Gastrocnemius medialis (tissue), 4 donors: ENCODE measurements at regions of chr5 and their contacts with region 1.

Region 1: DNA sequence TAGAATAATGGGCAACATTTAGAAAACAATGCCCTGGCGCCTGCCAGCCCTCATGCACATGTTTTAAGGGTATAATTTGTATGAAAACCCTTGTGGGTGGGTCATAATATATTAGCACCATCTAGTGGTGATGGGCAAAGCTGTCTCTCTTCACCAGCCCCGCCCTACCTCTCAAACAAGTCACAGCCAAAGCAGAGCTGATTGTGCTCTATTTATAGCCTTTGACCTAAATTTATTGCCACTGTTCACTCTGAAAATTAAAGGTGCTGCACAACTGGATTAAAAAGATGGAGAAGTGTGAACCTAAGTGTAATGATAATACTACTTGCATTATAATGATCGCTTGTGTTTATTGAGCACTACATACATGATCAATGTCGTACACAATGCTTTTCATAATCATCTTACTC is 131.9 kb upstream of the ANKH start:
- DNase-seq: peak; percentile 38 to 58
- ATAC-seq: peak; percentile 92 to 93
- H3K4me3 ChIP-seq: no peak overlapping the region
- H3K27ac ChIP-seq: no peak overlapping the region
- H3K4me1 ChIP-seq: peaks cover 0 to 12% of the 10 kb centered on the region in 2 donors
- H3K27me3 ChIP-seq: no peaks in the 10 kb centered on the region
- CTCF ChIP-seq: peak; percentile 72 to 83 (median 75)
- POLR2A ChIP-seq: no peak

Region 2: GRCh38 chr5:14351845-14352712 is 651.4 kb before region 1 on chr5:
- in situ Hi-C with region 1: loop called in 3 of 4 experiments (anchors 25 kb)
- intact Hi-C with region 1: no loop called
- DNase-seq: peak; percentile 19 to 57
- ATAC-seq: peak; percentile 78 to 94
- H3K4me3 ChIP-seq: no peak overlapping the region
- H3K27ac ChIP-seq: no peak overlapping the region
- H3K4me1 ChIP-seq: no peaks in the 10 kb centered on the region
- H3K27me3 ChIP-seq: no peaks in the 10 kb centered on the region
- CTCF ChIP-seq: peak; percentile 69 to 96 (median 79)
- POLR2A ChIP-seq: no peak

Region 3: DNA sequence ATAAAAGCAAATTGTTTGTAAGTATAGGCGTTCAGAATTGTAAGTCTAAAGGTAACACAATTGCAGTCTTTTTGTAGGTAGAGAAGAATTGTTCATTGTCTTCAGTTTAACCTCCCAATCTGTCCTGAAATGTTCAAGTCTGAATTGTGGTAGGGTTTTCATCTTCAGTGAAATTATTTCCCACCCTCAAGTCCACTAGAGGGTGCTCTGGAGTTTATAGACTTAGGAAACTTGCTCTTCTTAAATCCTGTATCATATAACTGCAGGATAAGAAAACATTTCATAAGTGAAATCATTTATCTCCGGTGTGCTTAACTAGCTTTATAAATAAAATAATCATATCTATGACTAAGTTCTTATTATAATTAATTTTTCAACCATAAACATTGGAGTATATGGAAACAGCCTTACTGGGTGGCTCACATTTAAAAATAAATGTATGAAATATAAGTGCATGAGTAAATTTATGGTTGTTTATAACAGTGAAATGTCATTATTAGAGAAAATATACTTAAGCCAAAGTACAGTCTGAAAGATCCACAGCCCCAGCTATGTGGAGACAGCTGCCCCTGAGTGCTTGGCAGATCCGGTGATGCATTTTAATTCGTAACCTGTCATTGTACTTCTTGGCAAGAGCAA is 604.3 kb before region 1 on chr5:
- in situ Hi-C with region 1: loop called in 1 of 4 experiments (anchors 25 kb)
- intact Hi-C with region 1: no loop called
- DNase-seq: no peak
- ATAC-seq: peak; percentile 40 to 73
- H3K4me3 ChIP-seq: no peak overlapping the region
- H3K27ac ChIP-seq: peak overlapping the region in 1 of 4 donors; percentile 26
- H3K4me1 ChIP-seq: peaks cover 0 to 11% of the 10 kb centered on the region in 2 donors
- H3K27me3 ChIP-seq: no peaks in the 10 kb centered on the region
- CTCF ChIP-seq: peak; percentile 39 to 72 (median 48)
- POLR2A ChIP-seq: no peak

Region 4: GRCh38 chr5:14685757-14686156 is 317.8 kb before region 1 on chr5:
- in situ Hi-C with region 1: loop called in 1 of 4 experiments (anchors 5 kb)
- intact Hi-C with region 1: loop called (anchors 2 kb)
- DNase-seq: no peak
- ATAC-seq: peak; percentile 67 to 68
- H3K4me3 ChIP-seq: no peak overlapping the region
- H3K27ac ChIP-seq: peak overlapping the region in 3 of 4 donors; percentile 37 to 67 (median 45)
- H3K4me1 ChIP-seq: peaks cover 31 to 33% of the 10 kb centered on the region in 2 donors
- H3K27me3 ChIP-seq: no peaks in the 10 kb centered on the region
- CTCF ChIP-seq: peak; percentile 55 to 71 (median 66)
- POLR2A ChIP-seq: no peak

Region 5: GRCh38 chr5:14727428-14727865 is 276.1 kb before region 1 on chr5:
- in situ Hi-C with region 1: loop called in 3 of 4 experiments (anchors 5 to 10 kb)
- intact Hi-C with region 1: loop called (anchors 1 kb)
- DNase-seq: peak; percentile 56 to 69
- ATAC-seq: peak; percentile 76 to 80
- H3K4me3 ChIP-seq: no peak overlapping the region
- H3K27ac ChIP-seq: peak overlapping the region; percentile 77 to 88 (median 83)
- H3K4me1 ChIP-seq: peaks cover 39 to 44% of the 10 kb centered on the region in 2 donors
- H3K27me3 ChIP-seq: no peaks in the 10 kb centered on the region
- CTCF ChIP-seq: peak; percentile 87 to 94 (median 92)
- POLR2A ChIP-seq: no peak

Region 6: GRCh38 chr5:14871210-14872069 is 132.1 kb before region 1 on chr5 and contains the start of gene ANKH:
- in situ Hi-C with region 1: loop called in 2 of 4 experiments (anchors 10 kb)
- intact Hi-C with region 1: loop called (anchors 2 kb)
- DNase-seq: peak; percentile 38 to 74
- ATAC-seq: peak; percentile 76 to 78
- H3K4me3 ChIP-seq: peak within 1 kb of the TSS; percentile 69 to 88 (median 85)
- H3K27ac ChIP-seq: peak within 1 kb of the TSS; percentile 89 to 94 (median 92)
- H3K4me1 ChIP-seq: peaks cover 14% of the 10 kb centered on the region in 2 donors
- H3K27me3 ChIP-seq: no peaks in the 10 kb centered on the region
- CTCF ChIP-seq: peak in 2 of 5 experiments; percentile 17 to 41
- POLR2A ChIP-seq: peak; percentile 58 to 59
- total RNA-seq, gene ANKH: 33.5 to 52.1 (median 36.0) TPM

Region 7: GRCh38 chr5:14946815-14947640 is 56.5 kb before region 1 on chr5:
- in situ Hi-C with region 1: no loop called
- intact Hi-C with region 1: loop called (anchors 2 kb)
- DNase-seq: no peak
- ATAC-seq: no peak
- H3K4me3 ChIP-seq: no peak overlapping the region
- H3K27ac ChIP-seq: no peak overlapping the region
- H3K4me1 ChIP-seq: no peaks in the 10 kb centered on the region
- H3K27me3 ChIP-seq: no peaks in the 10 kb centered on the region
- CTCF ChIP-seq: peak in 1 of 5 experiments; percentile 36
- POLR2A ChIP-seq: no peak